MCF 10A (cell line): ENCODE measurements at regions of chr2 and their contacts with region 1.

Region 1: DNA sequence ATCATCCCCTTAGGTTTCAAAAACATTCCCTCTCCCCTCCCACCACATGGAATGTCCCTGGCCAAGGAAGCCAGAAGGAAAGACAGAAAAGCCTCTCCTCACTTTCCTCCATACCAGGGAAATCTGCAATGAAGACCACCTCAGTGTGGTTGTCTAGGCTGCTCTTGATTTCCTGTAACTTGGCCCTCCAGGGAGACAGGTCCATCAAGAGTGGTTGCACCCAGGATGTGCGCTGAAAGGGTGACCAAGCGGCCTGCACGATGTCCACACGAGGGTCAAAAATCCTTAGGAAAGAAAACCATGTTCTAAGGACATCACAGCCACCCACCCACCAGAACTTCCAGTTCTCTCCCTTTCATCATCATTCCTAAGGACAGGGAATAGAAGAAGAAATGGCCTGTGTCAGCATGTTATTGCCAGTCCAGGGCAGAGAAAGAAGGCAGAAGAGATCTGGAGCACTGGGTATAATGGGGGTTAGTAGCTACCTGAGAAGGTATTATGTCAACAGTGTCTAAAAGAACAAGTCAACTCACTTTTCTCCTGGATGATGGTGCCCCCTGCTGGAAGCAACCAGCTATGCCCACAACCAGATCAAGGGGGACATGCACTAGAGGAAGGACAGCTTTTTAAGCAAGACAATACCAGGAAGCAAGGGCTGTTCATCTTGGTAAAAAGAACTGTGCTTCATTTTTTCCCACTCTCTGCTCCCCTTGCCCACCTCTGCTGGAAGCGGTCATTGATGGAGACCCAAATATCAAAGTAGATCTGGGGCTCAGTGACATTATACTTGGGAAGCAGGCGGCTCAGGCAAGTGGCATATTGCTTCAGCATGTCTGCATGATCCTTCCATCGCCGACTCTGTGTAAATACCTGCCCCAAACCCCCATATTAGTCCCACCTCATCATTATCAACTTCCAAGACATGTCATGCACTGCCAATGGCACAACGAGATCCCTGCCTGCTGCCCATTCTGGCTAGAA is 9.3 kb downstream of the GGCX start:
- DNase-seq: peak; percentile 88
- H3K4me3 Mint-ChIP-seq: no peak overlapping the region
- H3K27ac Mint-ChIP-seq: no peak overlapping the region
- H3K4me1 Mint-ChIP-seq: peaks cover 1% of the 10 kb centered on the region
- H3K27me3 Mint-ChIP-seq: no peaks in the 10 kb centered on the region
- CTCF ChIP-seq: peak; percentile 87

Region 2: DNA sequence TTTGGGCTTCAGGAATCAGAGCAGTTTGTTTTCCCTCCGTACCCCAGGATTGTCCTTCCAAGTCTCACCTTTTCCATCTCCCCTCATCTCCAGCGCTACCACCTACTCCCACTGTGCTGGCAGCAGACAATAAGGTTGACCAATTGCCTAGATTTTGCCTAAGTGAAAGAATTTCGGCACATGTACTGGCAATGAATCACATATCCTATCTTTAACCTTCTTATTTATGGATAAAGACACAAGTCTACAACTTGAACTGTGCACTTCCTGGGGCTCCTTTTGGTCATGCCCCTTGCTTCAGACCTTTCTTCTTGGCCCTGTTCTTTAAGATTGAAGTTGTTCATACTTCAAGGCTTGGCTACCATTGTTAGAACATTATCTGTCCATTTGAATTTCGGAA is 509.7 kb before region 1 on chr2:
- CTCF ChIA-PET with region 1: no interaction called
- POLR2A ChIA-PET with region 1: no interaction called
- intact Hi-C with region 1: no loop called
- DNase-seq: no peak
- H3K4me3 Mint-ChIP-seq: no peak overlapping the region
- H3K27ac Mint-ChIP-seq: peak overlapping the region; percentile 29
- H3K4me1 Mint-ChIP-seq: peaks cover 12% of the 10 kb centered on the region
- H3K27me3 Mint-ChIP-seq: no peaks in the 10 kb centered on the region
- CTCF ChIP-seq: no peak

Region 3: DNA sequence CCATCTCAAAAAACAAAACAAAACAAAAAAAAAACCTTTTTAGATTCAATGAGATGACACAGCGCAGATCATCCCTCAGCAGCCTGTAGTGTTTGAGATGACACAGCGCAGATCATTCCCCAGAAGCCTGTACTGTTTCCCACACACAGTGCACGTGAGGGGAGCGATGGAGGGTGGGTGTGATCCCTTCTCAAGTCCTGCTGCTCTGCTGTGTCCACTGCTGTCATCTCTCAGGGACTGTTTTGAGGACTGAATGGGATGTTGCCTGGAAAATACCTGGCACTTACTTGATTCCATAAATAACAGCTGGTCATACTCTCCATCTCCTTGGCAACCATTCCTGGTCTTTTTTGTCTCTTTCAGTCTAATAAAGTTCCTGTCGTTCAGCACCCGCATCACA is 249.9 kb before region 1 on chr2:
- CTCF ChIA-PET with region 1: interaction called, 11 read pairs
- POLR2A ChIA-PET with region 1: no interaction called
- intact Hi-C with region 1: no loop called
- DNase-seq: no peak
- H3K4me3 Mint-ChIP-seq: no peak overlapping the region
- H3K27ac Mint-ChIP-seq: no peak overlapping the region
- H3K4me1 Mint-ChIP-seq: no peaks in the 10 kb centered on the region
- H3K27me3 Mint-ChIP-seq: no peaks in the 10 kb centered on the region
- CTCF ChIP-seq: no peak

Region 4: DNA sequence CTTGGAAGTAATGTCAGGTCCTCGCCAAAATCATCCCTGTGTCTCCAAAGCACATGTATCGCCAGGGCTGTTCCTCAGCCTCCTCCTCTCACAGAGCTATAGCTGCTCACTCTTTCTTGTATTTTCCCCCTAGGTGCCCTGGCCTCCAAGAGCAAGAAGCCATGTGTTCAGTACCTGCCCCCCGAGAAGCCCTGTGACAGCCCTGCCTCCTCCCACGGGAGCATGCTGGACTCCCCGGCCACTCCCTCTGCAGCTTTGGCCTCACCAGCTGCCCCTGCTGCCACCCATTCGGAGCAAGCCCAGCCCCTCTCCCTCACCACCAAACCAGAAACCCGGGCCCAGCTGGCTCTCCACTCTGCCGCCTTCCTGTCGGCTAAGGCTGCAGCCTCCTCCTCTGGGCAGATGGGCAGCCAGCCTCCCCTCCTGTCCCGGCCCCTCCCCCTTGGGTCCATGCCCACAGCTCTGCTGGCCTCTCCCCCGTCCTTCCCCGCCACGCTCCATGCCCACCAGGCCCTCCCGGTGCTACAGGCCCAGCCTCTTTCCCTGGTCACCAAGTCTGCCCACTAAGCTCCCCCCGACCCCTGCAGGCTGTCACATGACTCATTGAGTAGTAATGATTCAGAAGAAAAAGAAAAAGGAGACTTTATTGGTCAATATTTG is 243.0 kb before region 1 on chr2:
- CTCF ChIA-PET with region 1: no interaction called
- POLR2A ChIA-PET with region 1: no interaction called
- intact Hi-C with region 1: loop called (anchors 5 kb)
- DNase-seq: no peak
- H3K4me3 Mint-ChIP-seq: no peak overlapping the region
- H3K27ac Mint-ChIP-seq: no peak overlapping the region
- H3K4me1 Mint-ChIP-seq: peaks cover 6% of the 10 kb centered on the region
- H3K27me3 Mint-ChIP-seq: no peaks in the 10 kb centered on the region
- CTCF ChIP-seq: no peak

Region 5: GRCh38 chr2:85390941-85391669 is 160.9 kb before region 1 on chr2:
- CTCF ChIA-PET with region 1: interaction called, 7 read pairs
- POLR2A ChIA-PET with region 1: interaction called, 4 read pairs
- intact Hi-C with region 1: loop called (anchors 1 kb)
- DNase-seq: peak; percentile 56
- H3K4me3 Mint-ChIP-seq: no peak overlapping the region
- H3K27ac Mint-ChIP-seq: no peak overlapping the region
- H3K4me1 Mint-ChIP-seq: peaks cover 6% of the 10 kb centered on the region
- H3K27me3 Mint-ChIP-seq: no peaks in the 10 kb centered on the region
- CTCF ChIP-seq: peak; percentile 52

Region 6: GRCh38 chr2:85409845-85410583 is 142.0 kb before region 1 on chr2 and contains the start of gene CAPG:
- CTCF ChIA-PET with region 1: interaction called, 20 read pairs
- POLR2A ChIA-PET with region 1: interaction called, 11 read pairs
- intact Hi-C with region 1: no loop called
- DNase-seq: peak; percentile 73
- H3K4me3 Mint-ChIP-seq: peak within 1 kb of the TSS; percentile 70
- H3K27ac Mint-ChIP-seq: peak within 1 kb of the TSS; percentile 83
- H3K4me1 Mint-ChIP-seq: peaks cover 34% of the 10 kb centered on the region
- H3K27me3 Mint-ChIP-seq: no peaks in the 10 kb centered on the region
- CTCF ChIP-seq: no peak
- total RNA-seq, gene CAPG: 173 and 188 TPM in 2 replicates

Region 7: DNA sequence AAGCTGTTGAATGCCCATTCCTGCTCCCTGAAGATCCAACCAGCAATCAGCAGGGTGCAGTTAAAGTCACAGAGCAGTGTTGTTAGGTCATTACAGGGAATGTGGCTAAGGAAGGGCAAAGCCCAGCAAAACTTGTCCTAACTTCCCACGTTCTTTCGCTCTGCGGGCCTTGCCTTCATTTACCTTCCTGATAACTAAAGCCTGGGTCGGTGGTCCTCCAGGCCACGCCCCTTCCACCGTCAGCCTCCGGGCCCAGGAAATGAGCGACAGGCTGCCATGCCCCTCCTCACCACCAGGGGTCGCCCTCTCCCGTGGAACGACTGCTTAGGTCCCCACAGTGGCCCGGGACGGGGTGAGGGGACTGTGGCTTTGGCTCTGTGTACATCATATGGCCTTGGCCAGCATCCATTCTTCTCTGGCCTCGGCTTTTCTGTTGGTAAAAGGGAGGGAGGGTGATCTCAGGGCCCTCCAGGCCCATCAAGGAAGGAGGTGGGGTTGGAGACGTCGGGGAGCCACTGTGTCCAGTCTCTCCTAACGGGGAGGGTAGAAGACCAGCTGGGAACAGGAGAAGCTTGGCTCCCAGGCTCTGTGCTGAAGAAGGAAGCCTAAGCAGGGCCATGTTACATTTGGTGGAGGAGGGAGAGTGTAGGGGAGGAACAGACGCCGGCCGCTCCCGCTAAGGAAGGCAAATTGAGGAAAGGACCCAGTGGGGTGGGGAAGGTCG is 131.3 kb before region 1 on chr2:
- CTCF ChIA-PET with region 1: interaction called, 293 read pairs
- POLR2A ChIA-PET with region 1: interaction called, 153 read pairs
- intact Hi-C with region 1: loop called (anchors 1 kb)
- DNase-seq: peak; percentile 83
- H3K4me3 Mint-ChIP-seq: peak overlapping the region; percentile 24
- H3K27ac Mint-ChIP-seq: peak overlapping the region; percentile 92
- H3K4me1 Mint-ChIP-seq: peaks cover 30% of the 10 kb centered on the region
- H3K27me3 Mint-ChIP-seq: no peaks in the 10 kb centered on the region
- CTCF ChIP-seq: peak; percentile 99

Region 8: DNA sequence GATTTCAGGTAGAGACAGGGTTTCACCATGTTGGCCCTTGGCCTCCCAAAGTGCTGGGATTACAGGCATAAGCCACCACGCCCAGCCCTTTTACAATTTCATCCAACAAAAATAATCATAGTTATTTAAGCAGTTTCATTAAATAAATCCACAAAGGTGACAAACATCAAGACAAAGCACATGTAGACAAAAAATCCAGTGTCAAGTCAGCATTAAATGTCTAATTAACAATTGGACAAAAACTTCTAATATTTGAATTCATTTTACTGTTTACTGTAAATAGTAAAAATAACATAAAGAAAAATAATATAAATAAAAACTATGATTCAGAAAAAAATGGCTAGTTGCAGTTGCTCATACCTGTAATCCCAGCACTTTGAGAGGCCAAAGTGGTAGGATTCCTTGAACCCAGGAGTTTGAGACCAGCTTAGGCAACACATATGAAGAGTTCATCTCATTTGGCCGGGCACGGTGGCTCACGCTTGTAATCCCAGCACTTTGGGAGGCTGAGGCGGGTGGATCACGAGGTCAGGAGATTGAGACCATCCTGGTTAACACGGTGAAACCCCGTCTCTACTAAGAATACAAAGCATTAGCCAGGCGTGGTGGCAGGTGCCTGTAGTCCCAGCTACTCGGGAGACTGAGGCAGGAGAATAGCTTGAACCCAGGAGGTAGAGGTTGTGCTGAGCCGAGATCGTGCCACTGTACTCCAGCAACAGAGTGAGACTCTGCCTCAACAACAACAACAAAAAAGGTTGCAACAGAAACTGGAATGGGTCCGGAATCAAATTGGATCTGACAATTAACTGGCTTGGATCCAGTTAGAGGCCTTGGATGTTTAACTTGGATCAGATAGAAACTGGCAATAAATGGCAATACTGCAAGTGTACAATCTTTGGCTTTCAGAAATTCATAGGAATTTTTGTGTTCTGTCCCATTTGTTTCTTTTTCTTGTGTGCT is 69.9 kb before region 1 on chr2:
- CTCF ChIA-PET with region 1: no interaction called
- POLR2A ChIA-PET with region 1: no interaction called
- intact Hi-C with region 1: no loop called
- DNase-seq: no peak
- H3K4me3 Mint-ChIP-seq: no peak overlapping the region
- H3K27ac Mint-ChIP-seq: no peak overlapping the region
- H3K4me1 Mint-ChIP-seq: peaks cover 3% of the 10 kb centered on the region
- H3K27me3 Mint-ChIP-seq: no peaks in the 10 kb centered on the region
- CTCF ChIP-seq: no peak